Activated B cell treated with CpG ODN at 0.5 μM for 24 hours (primary cell): ENCODE measurements at regions of chr2 and their contacts with region 1.

Region 1: DNA sequence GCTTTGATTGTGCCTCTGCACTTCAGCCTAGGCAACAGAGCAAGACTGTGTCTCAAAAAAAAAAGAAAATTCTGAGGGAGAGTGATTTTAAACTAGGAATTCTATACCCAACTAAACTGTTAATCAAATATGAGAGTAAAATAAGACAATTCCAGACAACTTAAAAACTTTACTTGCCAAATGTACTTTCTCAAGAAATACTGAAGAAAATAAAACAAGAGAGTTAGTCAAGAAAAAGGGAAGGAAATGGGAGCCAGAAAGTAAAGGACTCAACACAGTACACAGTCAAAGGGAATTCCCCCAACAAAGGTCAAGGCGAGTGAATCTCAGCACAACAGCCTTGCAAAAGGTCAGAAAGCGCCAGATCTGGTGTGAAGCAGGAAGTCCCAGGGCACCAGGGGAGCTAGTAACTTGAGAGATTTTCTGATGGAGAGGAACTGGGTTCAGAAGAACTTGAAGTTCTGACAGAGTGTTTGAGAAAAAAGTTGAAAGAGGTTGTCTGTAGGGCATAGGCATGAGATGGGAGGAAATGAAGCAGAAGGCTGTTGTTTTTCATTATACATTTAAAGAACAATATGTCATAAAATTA is 22.6 kb upstream of the TBC1D8 start:
- DNase-seq: peak; percentile 39
- ATAC-seq: peak; percentile 100
- H3K4me3 Mint-ChIP-seq: peak overlapping the region; percentile 29
- H3K27ac Mint-ChIP-seq: peak overlapping the region; percentile 87
- H3K4me1 Mint-ChIP-seq: peaks cover 35% of the 10 kb centered on the region
- H3K27me3 Mint-ChIP-seq: peaks cover 2% of the 10 kb centered on the region
- CTCF ChIP-seq: no peak

Region 2: GRCh38 chr2:101197215-101197745 is 23.5 kb after region 1 on chr2:
- CTCF ChIA-PET with region 1: no interaction called
- POLR2A ChIA-PET with region 1: interaction called, 10 read pairs
- intact Hi-C with region 1: no loop called
- DNase-seq: no peak
- ATAC-seq: no peak
- H3K4me3 Mint-ChIP-seq: no peak overlapping the region
- H3K27ac Mint-ChIP-seq: no peak overlapping the region
- H3K4me1 Mint-ChIP-seq: no peaks in the 10 kb centered on the region
- H3K27me3 Mint-ChIP-seq: peaks cover 10% of the 10 kb centered on the region
- CTCF ChIP-seq: no peak